AG04449 (cell line): ENCODE measurements at regions of chr2 and their contacts with region 1.

Region 1: DNA sequence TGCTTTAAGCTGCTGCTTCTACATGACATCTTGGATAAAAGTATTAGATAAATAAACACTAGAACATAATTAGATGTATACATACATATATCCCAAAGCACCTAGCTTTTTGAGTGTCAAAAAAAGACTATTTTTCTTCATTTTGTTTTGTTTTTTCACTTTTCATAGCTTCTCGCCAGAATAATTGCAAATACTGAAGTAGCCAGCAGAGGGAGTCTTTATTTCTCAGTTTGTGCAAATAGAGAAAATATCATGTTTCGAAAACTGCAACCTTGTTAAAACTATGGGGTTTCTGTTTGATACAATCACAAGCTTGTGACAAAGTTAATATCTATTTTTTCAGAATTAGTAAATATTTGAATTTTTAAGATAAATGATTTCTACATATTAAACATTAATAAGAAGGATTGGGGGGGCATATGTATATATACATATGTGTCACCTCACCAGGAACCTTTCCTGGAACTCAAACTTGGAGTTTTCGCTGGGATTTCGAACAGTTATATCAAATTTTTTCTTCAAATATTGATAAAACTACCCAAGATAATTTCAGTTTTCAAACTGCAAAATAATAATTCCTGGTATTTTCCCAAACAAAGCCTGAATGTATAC is 61.0 kb downstream of the GRB14 start:
- DNase-seq: no peak
- H3K4me3 ChIP-seq: no peak overlapping the region
- CTCF ChIP-seq: peak; percentile 52

Region 2: GRCh38 chr2:164545484-164545883 is 14.8 kb before region 1 on chr2:
- CTCF ChIA-PET with region 1: interaction called, 29 read pairs
- POLR2A ChIA-PET with region 1: no interaction called
- DNase-seq: no peak
- H3K4me3 ChIP-seq: no peak overlapping the region
- CTCF ChIP-seq: no peak

Region 3: DNA sequence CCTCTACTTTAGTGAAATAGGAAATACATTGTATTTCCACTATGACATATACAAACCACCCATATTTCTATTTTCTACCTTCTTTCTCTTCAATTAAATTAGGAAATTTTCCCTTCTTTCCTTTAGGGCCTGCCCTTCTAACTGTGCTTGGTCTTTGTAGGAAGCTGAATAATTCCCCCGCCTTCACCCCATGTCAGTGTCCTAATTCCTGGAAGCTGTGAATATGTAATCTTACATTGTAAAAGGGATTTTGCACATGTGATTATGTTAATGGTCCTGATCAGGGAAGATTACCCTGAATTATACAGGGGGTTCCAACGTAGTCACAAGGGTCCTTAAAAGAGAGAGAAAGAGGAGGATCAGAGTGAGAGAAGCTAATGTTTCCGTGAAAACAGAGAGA is 20.8 kb after region 1 on chr2:
- CTCF ChIA-PET with region 1: interaction called, 63 read pairs
- POLR2A ChIA-PET with region 1: no interaction called
- DNase-seq: no peak
- H3K4me3 ChIP-seq: no peak overlapping the region
- CTCF ChIP-seq: no peak

Region 4: GRCh38 chr2:164661362-164661761 is 101.1 kb after region 1 on chr2:
- CTCF ChIA-PET with region 1: interaction called, 12 read pairs
- POLR2A ChIA-PET with region 1: no interaction called
- DNase-seq: no peak
- H3K4me3 ChIP-seq: no peak overlapping the region
- CTCF ChIP-seq: no peak

Region 5: GRCh38 chr2:164697674-164698461 is 137.6 kb after region 1 on chr2:
- CTCF ChIA-PET with region 1: interaction called, 22 read pairs
- POLR2A ChIA-PET with region 1: no interaction called
- DNase-seq: no peak
- H3K4me3 ChIP-seq: no peak overlapping the region
- CTCF ChIP-seq: peak; percentile 46

Region 6: DNA sequence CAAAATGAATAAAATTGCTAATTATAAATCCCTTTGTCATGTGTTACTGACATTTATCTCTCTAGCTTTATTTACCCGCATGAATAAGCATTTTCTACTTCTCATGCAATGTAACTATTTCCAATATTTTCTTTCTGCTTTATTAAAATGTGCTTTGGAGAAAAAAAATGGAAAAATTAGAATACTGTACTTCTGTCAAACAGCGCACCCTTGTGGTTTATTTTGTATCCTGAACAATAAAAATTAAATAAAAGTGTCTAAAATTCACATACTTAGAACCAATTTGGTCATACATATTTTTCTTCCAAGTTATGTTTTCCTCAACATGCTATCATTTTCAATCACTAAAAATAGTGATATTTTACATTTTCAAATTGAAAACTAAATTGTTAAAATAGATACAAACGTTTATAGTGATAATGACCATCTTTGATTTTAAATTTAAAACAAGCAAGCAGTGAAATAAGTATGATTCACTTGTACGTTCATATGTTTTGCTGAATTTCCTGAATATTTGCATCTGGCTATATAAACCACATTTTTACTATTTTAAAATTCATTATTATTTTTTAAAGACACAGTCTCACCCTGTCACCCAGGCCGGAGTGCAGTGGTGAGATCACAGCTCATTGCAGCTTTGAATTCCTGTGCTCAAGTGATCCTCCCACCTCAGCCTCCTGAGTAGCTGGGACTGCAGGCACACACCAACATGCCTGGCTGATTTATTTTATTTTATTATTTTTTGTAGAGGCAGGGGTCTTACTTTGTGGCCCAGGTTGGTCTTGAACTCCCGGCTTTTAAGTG is 156.9 kb after region 1 on chr2:
- CTCF ChIA-PET with region 1: interaction called, 125 read pairs
- POLR2A ChIA-PET with region 1: no interaction called
- DNase-seq: no peak
- H3K4me3 ChIP-seq: no peak overlapping the region
- CTCF ChIP-seq: no peak